Activated naive CD4-positive, alpha-beta T cell treated with anti-CD3 and anti-CD28 coated beads for 36 hours (primary cell): ENCODE measurements at regions of chr1 and their contacts with region 1.

Region 1: DNA sequence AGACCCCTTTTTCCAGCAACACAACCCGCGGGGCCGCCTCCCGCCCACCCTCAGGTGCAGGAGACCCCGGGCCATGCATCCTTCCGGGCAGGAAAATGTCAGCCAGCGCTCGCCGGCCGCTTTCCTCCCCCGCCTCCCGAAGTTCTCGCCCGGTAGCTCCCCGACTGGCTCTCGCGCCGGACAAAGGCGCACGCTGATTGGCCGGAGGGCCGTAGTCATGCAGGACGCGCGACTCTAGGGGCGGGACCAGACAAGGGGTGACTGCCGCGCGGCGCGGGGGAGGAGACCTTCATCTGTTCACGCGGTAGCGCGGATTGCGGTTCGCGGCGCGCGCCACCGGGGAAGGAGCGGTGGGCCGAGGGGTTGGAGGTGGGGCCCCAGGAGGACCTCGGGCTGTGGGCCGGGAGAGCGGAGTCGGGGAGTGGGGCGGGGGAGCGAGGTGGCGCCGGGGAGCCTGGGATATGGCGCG is at the start of gene FLVCR1:
- DNase-seq: peak; percentile 98
- H3K4me3 Mint-ChIP-seq: peak within 1 kb of the TSS; percentile 97
- H3K27ac Mint-ChIP-seq: peak within 1 kb of the TSS; percentile 88
- H3K4me1 Mint-ChIP-seq: peaks cover 11% of the 10 kb centered on the region
- H3K27me3 Mint-ChIP-seq: no peaks in the 10 kb centered on the region
- total RNA-seq, gene FLVCR1: 6.0 to 7.3 TPM

Region 2: DNA sequence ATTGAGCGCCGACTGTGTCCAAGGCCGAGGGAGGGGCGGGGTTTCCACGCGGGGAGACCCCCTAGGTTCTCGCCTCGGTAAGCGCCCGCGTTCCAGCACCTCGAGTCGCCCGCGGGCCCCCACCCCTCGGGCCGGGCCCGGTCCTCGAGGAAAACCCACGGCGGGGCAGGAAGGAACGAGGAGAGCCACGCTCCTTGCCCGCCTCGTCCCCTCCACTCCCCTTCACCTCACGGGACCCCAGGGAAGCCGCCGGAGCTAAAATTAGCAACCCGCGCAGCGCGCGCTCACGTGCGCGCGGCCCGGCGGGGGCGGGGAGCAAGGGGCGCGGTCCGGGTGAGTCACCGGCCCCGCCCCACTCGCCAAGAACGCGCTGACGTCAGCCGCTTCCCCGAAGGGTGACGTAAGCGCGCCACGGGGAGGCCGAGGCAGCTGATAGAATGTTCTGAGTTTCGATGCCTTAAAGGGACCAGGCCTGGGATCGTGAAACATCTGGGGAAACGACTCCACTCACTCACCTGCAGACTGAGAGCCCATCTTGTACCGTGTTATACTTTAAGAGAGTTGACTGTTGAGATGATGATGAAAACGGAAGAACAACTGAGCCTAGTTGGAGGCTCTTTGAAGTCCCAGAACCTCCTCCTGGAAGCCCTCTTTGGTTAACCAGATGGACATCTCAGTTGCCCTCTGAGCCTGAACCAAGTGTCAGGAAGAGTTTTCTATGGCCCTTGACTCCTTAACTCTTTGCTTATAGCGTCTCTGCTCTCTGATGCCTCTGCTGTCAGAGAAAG is 299.1 kb before region 1 on chr1:
- CTCF ChIA-PET with region 1: no interaction called
- intact Hi-C with region 1: loop called (anchors 2 kb)
- DNase-seq: peak; percentile 94
- H3K4me3 Mint-ChIP-seq: peak overlapping the region; percentile 66
- H3K27ac Mint-ChIP-seq: peak overlapping the region; percentile 92
- H3K4me1 Mint-ChIP-seq: peaks cover 13% of the 10 kb centered on the region
- H3K27me3 Mint-ChIP-seq: peaks cover 12% of the 10 kb centered on the region

Region 3: GRCh38 chr1:212608209-212608955 is 249.6 kb before region 1 on chr1 and contains the start of gene ATF3:
- CTCF ChIA-PET with region 1: no interaction called
- intact Hi-C with region 1: loop called (anchors 1 kb)
- DNase-seq: peak; percentile 98
- H3K4me3 Mint-ChIP-seq: peak within 1 kb of the TSS; percentile 90
- H3K27ac Mint-ChIP-seq: peak within 1 kb of the TSS; percentile 92
- H3K4me1 Mint-ChIP-seq: peaks cover 52% of the 10 kb centered on the region
- H3K27me3 Mint-ChIP-seq: peaks cover 43% of the 10 kb centered on the region
- total RNA-seq, gene ATF3: 67.4 to 67.7 TPM

Region 4: DNA sequence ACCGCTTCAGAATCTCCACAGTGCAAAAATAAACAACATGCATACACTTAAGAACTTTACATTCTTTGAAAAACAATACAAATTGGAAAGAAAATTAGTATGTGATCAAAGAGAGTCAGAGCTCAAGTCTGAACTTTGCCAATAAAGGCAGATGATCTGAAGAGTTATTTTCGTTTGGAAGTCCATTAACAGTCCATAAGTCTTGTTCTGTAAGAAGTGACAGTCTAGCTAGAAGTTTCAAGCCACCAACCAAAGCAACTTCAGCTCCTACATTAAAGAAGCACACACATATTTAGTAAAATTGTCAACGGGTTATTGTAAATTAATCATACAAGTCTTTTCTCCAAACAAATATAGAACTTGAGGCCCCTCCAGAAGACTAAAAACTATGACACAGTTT is 136.9 kb after region 1 on chr1:
- CTCF ChIA-PET with region 1: interaction called, 6 read pairs
- intact Hi-C with region 1: loop called (anchors 1 kb)
- DNase-seq: no peak
- H3K4me3 Mint-ChIP-seq: no peak overlapping the region
- H3K27ac Mint-ChIP-seq: no peak overlapping the region
- H3K4me1 Mint-ChIP-seq: peaks cover 4% of the 10 kb centered on the region
- H3K27me3 Mint-ChIP-seq: no peaks in the 10 kb centered on the region

Region 5: GRCh38 chr1:213051127-213051880 is 193.3 kb after region 1 on chr1 and contains the start of gene RPS6KC1:
- CTCF ChIA-PET with region 1: no interaction called
- intact Hi-C with region 1: loop called (anchors 1 kb)
- DNase-seq: peak; percentile 88
- H3K4me3 Mint-ChIP-seq: peak within 1 kb of the TSS; percentile 97
- H3K27ac Mint-ChIP-seq: peak within 1 kb of the TSS; percentile 82
- H3K4me1 Mint-ChIP-seq: peaks cover 30% of the 10 kb centered on the region
- H3K27me3 Mint-ChIP-seq: peaks cover 13% of the 10 kb centered on the region
- total RNA-seq, gene RPS6KC1: 5.4 to 6.1 TPM